ENCODE measurements at regions of chr14 and their contacts with region 1.

Region 1: DNA sequence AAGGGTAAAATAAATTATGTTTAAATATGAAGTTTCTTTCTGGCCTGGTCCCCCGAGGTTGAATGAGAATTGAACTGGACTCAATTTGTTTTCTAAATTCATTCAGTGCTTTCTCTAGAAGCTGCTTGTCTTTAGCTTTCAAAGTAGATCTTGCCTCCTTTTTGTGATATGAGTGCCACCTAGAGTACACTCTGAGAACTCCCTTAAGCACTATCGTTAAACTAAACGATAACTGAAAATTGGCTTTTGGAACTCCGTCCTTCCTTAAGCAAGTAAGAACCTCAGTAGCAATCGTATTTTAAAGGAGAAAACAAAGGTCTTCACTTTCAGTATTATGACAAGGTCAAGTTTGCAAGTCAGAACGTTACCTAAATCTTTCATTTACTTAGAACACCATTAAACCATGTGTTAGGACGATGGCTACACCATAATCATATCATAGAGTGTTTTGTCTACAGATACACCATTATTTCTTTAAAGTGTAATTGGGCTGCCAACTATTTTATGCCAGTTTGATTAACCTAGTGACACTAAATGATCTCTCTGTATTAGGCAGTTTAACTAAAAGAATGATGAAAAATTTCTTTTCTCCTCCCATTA is 364.8 kb downstream of the SNAPC1 start:
- DNase-seq: peak; percentile 32
- H3K4me3 ChIP-seq: no peak overlapping the region
- H3K27ac ChIP-seq: no peak overlapping the region
- H3K27me3 ChIP-seq: no peaks in the 10 kb centered on the region
- CTCF ChIP-seq: peak; percentile 90

Region 2: GRCh38 chr14:61860294-61860918 is 266.6 kb before region 1 on chr14:
- CTCF ChIA-PET with region 1: interaction called, 18 read pairs
- POLR2A ChIA-PET with region 1: no interaction called
- DNase-seq: no peak
- H3K4me3 ChIP-seq: no peak overlapping the region
- H3K27ac ChIP-seq: no peak overlapping the region
- H3K27me3 ChIP-seq: peaks cover 5% of the 10 kb centered on the region
- CTCF ChIP-seq: peak; percentile 84

Region 3: DNA sequence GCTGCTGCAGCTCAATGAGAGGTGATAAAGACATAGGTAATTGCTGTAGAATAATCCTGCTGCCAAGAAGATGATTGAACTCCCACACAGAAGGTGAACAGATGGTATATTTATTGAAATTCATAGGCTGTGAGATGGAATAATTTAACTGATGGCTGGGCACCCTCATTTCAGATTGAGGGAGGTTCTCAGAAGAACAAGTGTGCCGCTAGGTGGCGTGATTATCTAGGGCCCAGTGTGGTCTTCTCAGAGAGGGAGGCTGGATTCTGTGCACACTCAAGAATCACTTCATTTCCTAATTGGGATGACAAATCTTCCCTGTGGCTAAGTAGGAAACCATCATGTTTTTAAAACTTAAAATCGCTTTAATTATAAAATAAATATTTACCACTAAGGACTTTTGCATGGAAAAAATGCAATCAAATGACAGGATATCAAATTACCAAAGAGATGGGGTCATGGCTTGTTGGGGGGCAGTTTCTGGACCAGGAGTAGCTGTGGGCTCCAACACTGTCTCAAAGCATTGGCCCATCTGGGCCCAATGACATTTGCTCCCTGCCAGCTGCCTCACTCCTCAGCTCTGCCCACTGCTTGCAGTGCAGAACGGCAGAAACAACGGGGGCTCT is 232.4 kb before region 1 on chr14:
- CTCF ChIA-PET with region 1: interaction called, 94 read pairs
- POLR2A ChIA-PET with region 1: interaction called, 3 read pairs
- DNase-seq: peak; percentile 16
- H3K4me3 ChIP-seq: no peak overlapping the region
- H3K27ac ChIP-seq: no peak overlapping the region
- H3K27me3 ChIP-seq: peaks cover 9% of the 10 kb centered on the region
- CTCF ChIP-seq: peak; percentile 82

Region 4: DNA sequence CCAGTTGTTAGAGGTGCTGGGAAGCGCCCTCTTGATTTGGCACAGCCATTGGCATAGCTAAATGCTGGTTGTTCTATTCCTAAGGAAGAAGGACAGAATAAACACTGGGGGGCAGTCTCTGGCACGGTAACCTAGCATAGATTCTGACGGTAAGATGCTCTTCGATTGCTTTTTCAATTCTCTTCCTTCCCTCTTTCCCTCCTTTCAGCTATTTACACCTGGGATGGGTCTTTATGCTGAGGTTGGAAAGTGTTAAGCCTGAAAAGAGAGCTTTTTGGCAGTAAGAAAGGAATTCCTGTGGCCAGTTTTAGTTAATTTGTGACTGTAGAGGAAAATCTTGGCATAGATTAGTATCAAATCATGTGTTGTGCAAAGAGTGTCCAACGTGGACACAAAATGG is 201.9 kb before region 1 on chr14:
- CTCF ChIA-PET with region 1: interaction called, 77 read pairs
- POLR2A ChIA-PET with region 1: interaction called, 3 read pairs
- DNase-seq: no peak
- H3K4me3 ChIP-seq: no peak overlapping the region
- H3K27ac ChIP-seq: no peak overlapping the region
- H3K27me3 ChIP-seq: no peaks in the 10 kb centered on the region
- CTCF ChIP-seq: peak; percentile 25; the same call in 1 of the 2 replicates

Region 5: GRCh38 chr14:62143245-62143644 is 16.3 kb after region 1 on chr14:
- CTCF ChIA-PET with region 1: interaction called, 10 read pairs
- POLR2A ChIA-PET with region 1: no interaction called
- DNase-seq: peak; percentile 32
- H3K4me3 ChIP-seq: no peak overlapping the region
- H3K27ac ChIP-seq: no peak overlapping the region
- H3K27me3 ChIP-seq: no peaks in the 10 kb centered on the region
- CTCF ChIP-seq: no peak